Naive thymus-derived CD4-positive, alpha-beta T cell (primary cell): ENCODE measurements at regions of chr2 and their contacts with region 1.

Region 1: DNA sequence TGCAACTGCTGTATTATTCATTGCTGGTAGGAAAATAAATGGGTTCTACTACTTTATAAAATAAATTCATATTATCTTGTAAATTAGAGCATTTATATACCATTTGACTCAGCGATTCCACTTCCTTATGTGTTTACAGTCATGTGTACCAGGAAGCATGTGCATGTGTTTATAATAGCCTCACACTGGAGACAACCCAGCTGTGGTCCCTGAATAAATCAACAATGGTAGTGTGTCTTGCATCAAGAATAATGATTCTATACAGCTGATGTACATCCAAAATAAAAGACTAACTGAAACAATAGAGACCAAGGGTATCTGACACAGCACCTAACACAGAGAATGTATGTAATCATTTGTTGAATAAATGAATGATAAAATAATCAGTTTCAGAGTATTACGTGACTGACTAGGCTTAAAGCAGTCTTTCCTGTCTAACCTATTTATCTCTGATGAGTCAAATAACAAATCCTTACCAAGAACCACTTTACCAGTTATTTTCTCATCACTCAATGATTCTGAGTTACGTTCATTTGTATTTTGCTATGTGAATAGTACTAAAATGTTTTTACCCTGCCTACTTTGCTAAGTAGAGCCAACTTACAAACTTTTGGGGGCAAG is 216.8 kb downstream of the UBE2E3 start:
- DNase-seq: no peak
- ATAC-seq: no peak
- H3K4me3 ChIP-seq: peak overlapping the region; percentile 26
- H3K4me3 Mint-ChIP-seq: peak overlapping the region in 8 of 10 donors; percentile 29 to 83 (median 69)
- H3K27ac ChIP-seq: no peak overlapping the region
- H3K27ac Mint-ChIP-seq: peak overlapping the region in 8 of 9 donors; percentile 74 to 94 (median 85)
- H3K4me1 ChIP-seq: peaks cover 34 to 38% of the 10 kb centered on the region in 2 donors
- H3K4me1 Mint-ChIP-seq: peaks cover 28 to 81% (median 65%) of the 10 kb centered on the region in 7 donors
- H3K27me3 ChIP-seq: no peaks in the 10 kb centered on the region
- H3K27me3 Mint-ChIP-seq: no peaks in the 10 kb centered on the region

Region 2: DNA sequence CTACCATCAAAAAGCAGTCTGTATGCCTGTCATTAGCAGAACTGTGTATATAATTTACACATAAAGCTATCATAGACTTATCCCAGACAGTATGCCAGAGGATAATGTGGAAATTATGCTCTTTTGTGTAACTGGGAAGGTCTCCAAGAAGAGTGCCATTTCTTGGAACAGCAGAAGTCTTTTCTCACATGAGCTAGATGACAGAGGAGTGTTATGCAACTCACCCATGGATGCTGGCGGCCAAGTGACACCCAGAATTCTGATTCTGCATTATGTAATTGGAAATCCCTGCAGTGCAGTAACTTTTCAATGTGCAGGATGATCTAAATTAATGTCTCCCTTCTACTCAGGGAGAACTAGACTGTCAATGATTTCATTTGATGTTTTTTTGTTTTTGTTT is 56.8 kb before region 1 on chr2:
- CTCF ChIA-PET with region 1: no interaction called
- POLR2A ChIA-PET with region 1: interaction called, 5 read pairs
- intact Hi-C with region 1: loop called in 1 of 2 experiments (anchors 5 kb)
- DNase-seq: peak in 1 of 9 donors; percentile 29
- ATAC-seq: peak; percentile 30
- H3K4me3 ChIP-seq: peak overlapping the region; percentile 20
- H3K4me3 Mint-ChIP-seq: peak overlapping the region; percentile 31 to 94 (median 86)
- H3K27ac ChIP-seq: peak overlapping the region; percentile 78
- H3K27ac Mint-ChIP-seq: peak overlapping the region; percentile 93 to 100 (median 98)
- H3K4me1 ChIP-seq: peaks cover 46 to 66% of the 10 kb centered on the region in 2 donors
- H3K4me1 Mint-ChIP-seq: peaks cover 33 to 83% (median 75%) of the 10 kb centered on the region in 7 donors
- H3K27me3 ChIP-seq: no peaks in the 10 kb centered on the region
- H3K27me3 Mint-ChIP-seq: no peaks in the 10 kb centered on the region

Region 3: DNA sequence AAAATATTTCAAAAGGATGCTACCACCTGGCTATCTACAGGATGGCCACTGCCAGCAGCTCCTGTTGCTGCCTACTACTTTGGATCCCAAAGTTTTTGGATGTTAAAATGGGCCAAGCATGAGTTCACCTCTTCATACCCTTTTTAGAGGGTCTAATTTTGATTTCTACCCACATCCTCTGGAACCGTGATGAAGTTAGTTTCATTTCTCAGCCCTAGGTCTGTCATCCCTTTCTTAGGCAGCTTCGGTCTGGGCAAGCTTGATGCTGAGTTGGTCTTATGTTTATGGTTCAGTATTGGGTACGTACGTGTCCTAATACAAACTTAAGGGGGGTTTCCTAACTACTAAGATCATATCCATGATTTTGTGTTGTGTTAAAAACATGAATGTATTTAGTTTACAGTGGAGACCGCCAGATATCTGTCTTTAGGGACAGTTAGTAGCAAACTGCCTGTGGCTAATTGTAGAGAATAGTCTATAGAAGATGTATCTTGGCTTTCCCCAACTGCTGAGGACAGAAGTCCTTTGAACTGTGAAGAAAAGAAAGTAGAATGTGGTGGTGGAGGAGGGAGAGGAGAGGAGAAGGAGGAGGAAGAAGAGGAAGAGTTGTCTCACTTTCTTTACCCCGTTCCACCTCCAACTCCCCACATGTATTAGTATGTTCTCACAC is 31.9 kb before region 1 on chr2:
- CTCF ChIA-PET with region 1: no interaction called
- POLR2A ChIA-PET with region 1: no interaction called
- intact Hi-C with region 1: loop called in 1 of 2 experiments (anchors 1 kb)
- DNase-seq: peak in 5 of 9 donors; percentile 28 to 54 (median 32)
- ATAC-seq: peak; percentile 77
- H3K4me3 ChIP-seq: peak overlapping the region; percentile 40
- H3K4me3 Mint-ChIP-seq: peak overlapping the region; percentile 73 to 87 (median 77)
- H3K27ac ChIP-seq: peak overlapping the region; percentile 58
- H3K27ac Mint-ChIP-seq: peak overlapping the region; percentile 89 to 98 (median 95)
- H3K4me1 ChIP-seq: peaks cover 31 to 45% of the 10 kb centered on the region in 2 donors
- H3K4me1 Mint-ChIP-seq: peaks cover 22 to 64% (median 51%) of the 10 kb centered on the region in 7 donors
- H3K27me3 ChIP-seq: no peaks in the 10 kb centered on the region
- H3K27me3 Mint-ChIP-seq: no peaks in the 10 kb centered on the region

Region 4: GRCh38 chr2:181183878-181184542 is 13.2 kb before region 1 on chr2:
- CTCF ChIA-PET with region 1: no interaction called
- POLR2A ChIA-PET with region 1: interaction called, 10 read pairs
- intact Hi-C with region 1: loop called in 1 of 2 experiments (anchors 1 kb)
- DNase-seq: no peak
- ATAC-seq: peak; percentile 55
- H3K4me3 ChIP-seq: no peak overlapping the region
- H3K4me3 Mint-ChIP-seq: no peak overlapping the region
- H3K27ac ChIP-seq: no peak overlapping the region
- H3K27ac Mint-ChIP-seq: peak overlapping the region in 1 of 9 donors; percentile 41
- H3K4me1 ChIP-seq: peaks cover 9% of the 10 kb centered on the region in 2 donors
- H3K4me1 Mint-ChIP-seq: peaks cover 12 to 45% (median 27%) of the 10 kb centered on the region in 7 donors
- H3K27me3 ChIP-seq: no peaks in the 10 kb centered on the region
- H3K27me3 Mint-ChIP-seq: no peaks in the 10 kb centered on the region

Region 5: DNA sequence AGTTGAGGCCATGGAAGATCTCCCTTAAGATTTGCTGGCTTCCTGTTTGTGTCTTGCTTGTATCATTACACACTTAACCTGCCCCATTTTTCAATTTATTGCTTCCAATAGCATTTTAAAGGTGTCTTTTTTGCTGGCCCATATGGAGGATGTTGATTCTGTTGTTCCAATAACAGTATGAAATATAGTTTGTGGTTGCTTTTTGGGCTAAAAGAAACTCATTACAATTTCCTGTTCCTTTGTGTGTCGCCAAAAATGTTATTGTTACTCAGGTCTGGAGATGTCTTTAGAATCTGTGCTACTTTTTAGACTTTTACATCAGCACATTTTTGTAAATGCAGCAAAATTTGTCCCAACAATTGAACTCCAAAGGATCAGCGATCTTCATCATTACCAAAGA is 26.0 kb after region 1 on chr2:
- CTCF ChIA-PET with region 1: no interaction called
- POLR2A ChIA-PET with region 1: interaction called, 4 read pairs
- intact Hi-C with region 1: loop called in 1 of 2 experiments (anchors 1 kb)
- DNase-seq: peak in 6 of 9 donors; percentile 13 to 54 (median 44)
- ATAC-seq: no peak
- H3K4me3 ChIP-seq: peak overlapping the region; percentile 0
- H3K4me3 Mint-ChIP-seq: peak overlapping the region in 9 of 10 donors; percentile 58 to 84 (median 66)
- H3K27ac ChIP-seq: peak overlapping the region; percentile 4
- H3K27ac Mint-ChIP-seq: peak overlapping the region; percentile 57 to 97 (median 88)
- H3K4me1 ChIP-seq: peaks cover 25% of the 10 kb centered on the region in 2 donors
- H3K4me1 Mint-ChIP-seq: peaks cover 7 to 64% (median 37%) of the 10 kb centered on the region in 7 donors
- H3K27me3 ChIP-seq: no peaks in the 10 kb centered on the region
- H3K27me3 Mint-ChIP-seq: no peaks in the 10 kb centered on the region